ENCODE measurements at regions of chr1 and their contacts with region 1.

Region 1: GRCh38 chr1:243638186-243638585 is 211.9 kb downstream of the AKT3 start:
- DNase-seq: no peak
- H3K4me3 ChIP-seq: no peak overlapping the region
- H3K4me3 Mint-ChIP-seq: peak overlapping the region in 2 of 8 donors; percentile 20 to 37
- H3K27ac ChIP-seq: no peak overlapping the region
- H3K27ac Mint-ChIP-seq: peak overlapping the region in 3 of 7 donors; percentile 1 to 48 (median 13)
- H3K4me1 ChIP-seq: no peaks in the 10 kb centered on the region
- H3K4me1 Mint-ChIP-seq: peaks cover 3 to 22% (median 11%) of the 10 kb centered on the region in 4 donors
- H3K27me3 ChIP-seq: no peaks in the 10 kb centered on the region
- H3K27me3 Mint-ChIP-seq: no peaks in the 10 kb centered on the region

Region 2: GRCh38 chr1:243596431-243597062 is 41.6 kb before region 1 on chr1:
- CTCF ChIA-PET with region 1: no interaction called
- POLR2A ChIA-PET with region 1: no interaction called
- intact Hi-C with region 1: loop called (anchors 5 kb)
- DNase-seq: peak; percentile 28 to 67 (median 40)
- H3K4me3 ChIP-seq: no peak overlapping the region
- H3K4me3 Mint-ChIP-seq: peak overlapping the region in 7 of 8 donors; percentile 36 to 80 (median 67)
- H3K27ac ChIP-seq: peak overlapping the region; percentile 1
- H3K27ac Mint-ChIP-seq: peak overlapping the region; percentile 67 to 89 (median 85)
- H3K4me1 ChIP-seq: peaks cover 41% of the 10 kb centered on the region
- H3K4me1 Mint-ChIP-seq: peaks cover 24 to 33% (median 30%) of the 10 kb centered on the region in 4 donors
- H3K27me3 ChIP-seq: no peaks in the 10 kb centered on the region
- H3K27me3 Mint-ChIP-seq: no peaks in the 10 kb centered on the region

Region 3: DNA sequence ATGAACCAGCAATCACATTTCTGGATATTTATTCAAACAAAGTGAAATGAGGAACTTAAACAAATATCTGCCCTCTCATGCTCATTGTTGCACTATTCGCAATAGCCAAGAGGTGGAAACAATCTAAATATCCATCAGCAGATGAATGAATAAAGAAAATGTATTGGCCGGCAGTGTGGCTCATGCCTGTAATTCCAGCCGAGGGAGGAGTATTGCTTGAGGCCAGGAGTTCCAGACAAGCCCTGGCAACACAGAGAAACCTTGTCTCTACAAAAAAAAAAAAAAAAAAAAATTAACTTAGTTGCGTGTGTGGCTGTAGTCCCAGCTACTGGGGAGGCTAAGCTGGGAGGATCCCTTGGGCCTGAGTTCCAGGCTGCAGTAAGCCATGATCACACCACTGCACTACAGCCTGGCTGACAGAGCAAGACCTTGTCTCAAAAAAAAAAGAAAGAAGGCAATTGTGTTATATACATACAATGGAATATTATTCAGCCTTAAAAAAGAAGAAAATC is 20.5 kb after region 1 on chr1:
- CTCF ChIA-PET with region 1: no interaction called
- POLR2A ChIA-PET with region 1: no interaction called
- intact Hi-C with region 1: no loop called
- DNase-seq: no peak
- H3K4me3 ChIP-seq: no peak overlapping the region
- H3K4me3 Mint-ChIP-seq: no peak overlapping the region
- H3K27ac ChIP-seq: no peak overlapping the region
- H3K27ac Mint-ChIP-seq: no peak overlapping the region
- H3K4me1 ChIP-seq: no peaks in the 10 kb centered on the region
- H3K4me1 Mint-ChIP-seq: peaks cover 5 to 9% (median 7%) of the 10 kb centered on the region in 4 donors
- H3K27me3 ChIP-seq: no peaks in the 10 kb centered on the region
- H3K27me3 Mint-ChIP-seq: no peaks in the 10 kb centered on the region